ENCODE measurements at regions of chr9 and their contacts with region 1.

Region 1: GRCh38 chr9:100598641-100599145 is 20.8 kb downstream of the CAVIN4 start:
- DNase-seq: peak; percentile 94
- H3K4me3 Mint-ChIP-seq: peak overlapping the region; percentile 78
- H3K27ac Mint-ChIP-seq: peak overlapping the region; percentile 13
- H3K4me1 Mint-ChIP-seq: peaks cover 11% of the 10 kb centered on the region
- H3K27me3 Mint-ChIP-seq: peaks cover 20% of the 10 kb centered on the region

Region 2: GRCh38 chr9:99184475-99185347 is 1414.0 kb before region 1 on chr9:
- intact Hi-C with region 1: loop called (anchors 10 kb)
- DNase-seq: peak; percentile 92
- H3K4me3 Mint-ChIP-seq: no peak overlapping the region
- H3K27ac Mint-ChIP-seq: peak overlapping the region; percentile 56
- H3K4me1 Mint-ChIP-seq: peaks cover 43% of the 10 kb centered on the region
- H3K27me3 Mint-ChIP-seq: peaks cover 15% of the 10 kb centered on the region

Region 3: GRCh38 chr9:100222674-100223073 is 376.0 kb before region 1 on chr9:
- intact Hi-C with region 1: loop called (anchors 5 kb)
- DNase-seq: no peak
- H3K4me3 Mint-ChIP-seq: no peak overlapping the region
- H3K27ac Mint-ChIP-seq: no peak overlapping the region
- H3K4me1 Mint-ChIP-seq: peaks cover 2% of the 10 kb centered on the region
- H3K27me3 Mint-ChIP-seq: no peaks in the 10 kb centered on the region

Region 4: DNA sequence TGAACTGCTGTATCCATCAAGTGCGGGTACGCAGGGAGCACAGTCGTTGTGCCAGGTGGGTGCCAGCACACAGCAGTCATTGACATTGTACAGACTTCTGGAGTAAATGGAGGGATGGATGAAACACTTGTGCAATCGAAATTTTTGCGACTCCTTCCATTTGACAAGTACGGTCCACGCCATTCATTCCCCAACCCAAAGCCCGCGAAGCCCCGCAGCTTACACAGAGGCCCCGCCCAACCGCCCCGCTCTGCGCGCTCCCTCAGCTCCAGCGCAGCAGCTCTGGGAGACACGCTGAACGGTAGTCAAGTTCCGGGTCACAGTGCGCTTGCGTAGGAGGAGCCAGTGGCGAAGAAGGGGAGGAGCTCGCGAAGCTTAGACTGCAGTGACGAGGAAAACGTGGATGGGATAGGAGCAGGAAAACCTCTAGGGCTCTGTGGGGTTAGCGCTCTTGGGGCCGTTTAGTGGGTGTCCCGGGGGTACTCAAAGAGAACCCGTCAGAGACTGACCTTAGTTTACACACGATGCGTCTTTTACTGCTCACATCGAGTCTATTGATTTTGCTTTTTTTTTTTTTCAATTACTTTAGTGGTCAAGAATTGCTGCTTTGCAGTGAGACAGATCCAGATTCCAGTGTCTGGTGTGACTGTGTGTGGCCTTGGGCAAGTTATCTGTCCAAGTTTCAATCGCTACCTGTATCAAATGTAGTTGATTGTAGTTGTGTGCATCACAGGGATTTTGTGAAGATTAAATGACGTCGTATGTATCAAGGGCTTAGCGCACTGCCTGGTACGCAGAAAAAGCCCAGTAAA is 187.0 kb before region 1 on chr9:
- intact Hi-C with region 1: loop called (anchors 1 kb)
- DNase-seq: peak; percentile 96
- H3K4me3 Mint-ChIP-seq: peak overlapping the region; percentile 86
- H3K27ac Mint-ChIP-seq: peak overlapping the region; percentile 80
- H3K4me1 Mint-ChIP-seq: peaks cover 12% of the 10 kb centered on the region
- H3K27me3 Mint-ChIP-seq: peaks cover 18% of the 10 kb centered on the region

Region 5: DNA sequence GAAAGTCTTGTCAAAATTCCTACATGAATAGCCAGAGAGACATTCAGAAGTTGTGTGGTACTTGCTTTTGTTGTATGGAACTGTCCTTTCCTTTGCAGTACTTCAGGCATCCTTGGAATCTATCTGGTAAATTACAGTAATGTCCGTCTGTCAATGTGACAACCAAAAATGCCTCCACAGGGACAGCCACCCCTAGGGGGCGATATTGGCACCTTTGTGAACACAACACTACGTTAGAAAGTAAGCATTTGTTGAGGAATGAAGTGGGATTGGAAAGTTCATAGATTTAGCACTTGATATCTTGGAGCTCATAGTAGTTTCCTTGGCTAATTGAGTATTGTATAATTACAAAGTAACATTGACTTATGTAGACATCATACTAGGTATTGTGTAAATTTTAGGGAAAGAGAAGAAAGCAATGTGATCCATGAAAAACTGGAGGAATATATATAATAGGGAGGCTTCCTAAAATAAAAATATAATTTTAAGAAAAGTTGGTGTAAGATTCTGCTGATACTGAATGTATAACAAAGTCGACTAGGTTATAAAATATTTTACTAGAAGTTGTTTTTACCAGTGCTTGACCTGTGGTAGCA is 93.0 kb before region 1 on chr9:
- intact Hi-C with region 1: loop called (anchors 1 kb)
- DNase-seq: peak; percentile 87
- H3K4me3 Mint-ChIP-seq: no peak overlapping the region
- H3K27ac Mint-ChIP-seq: no peak overlapping the region
- H3K4me1 Mint-ChIP-seq: no peaks in the 10 kb centered on the region
- H3K27me3 Mint-ChIP-seq: peaks cover 9% of the 10 kb centered on the region

Region 6: DNA sequence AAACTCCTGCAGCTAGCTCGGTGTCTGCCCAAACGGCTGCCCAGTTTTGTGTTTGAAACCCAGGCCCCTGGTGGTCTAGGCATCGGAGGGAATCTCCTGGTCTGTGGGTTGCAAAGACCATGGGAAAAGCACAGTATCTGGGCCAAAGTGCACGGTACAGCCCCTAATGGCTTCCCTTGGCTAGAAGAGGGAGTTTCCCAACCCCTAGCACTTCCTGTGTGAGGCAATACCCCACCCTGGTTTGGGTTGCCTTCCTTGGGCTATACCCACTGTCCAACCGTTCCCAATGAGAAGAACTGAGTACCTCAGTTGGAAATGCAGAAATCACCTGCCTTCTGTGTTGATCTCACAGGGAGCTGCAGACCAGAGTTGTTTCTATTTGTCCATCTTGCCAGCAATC is 21.0 kb after region 1 on chr9:
- intact Hi-C with region 1: no loop called
- DNase-seq: no peak
- H3K4me3 Mint-ChIP-seq: no peak overlapping the region
- H3K27ac Mint-ChIP-seq: no peak overlapping the region
- H3K4me1 Mint-ChIP-seq: no peaks in the 10 kb centered on the region
- H3K27me3 Mint-ChIP-seq: no peaks in the 10 kb centered on the region

Region 7: DNA sequence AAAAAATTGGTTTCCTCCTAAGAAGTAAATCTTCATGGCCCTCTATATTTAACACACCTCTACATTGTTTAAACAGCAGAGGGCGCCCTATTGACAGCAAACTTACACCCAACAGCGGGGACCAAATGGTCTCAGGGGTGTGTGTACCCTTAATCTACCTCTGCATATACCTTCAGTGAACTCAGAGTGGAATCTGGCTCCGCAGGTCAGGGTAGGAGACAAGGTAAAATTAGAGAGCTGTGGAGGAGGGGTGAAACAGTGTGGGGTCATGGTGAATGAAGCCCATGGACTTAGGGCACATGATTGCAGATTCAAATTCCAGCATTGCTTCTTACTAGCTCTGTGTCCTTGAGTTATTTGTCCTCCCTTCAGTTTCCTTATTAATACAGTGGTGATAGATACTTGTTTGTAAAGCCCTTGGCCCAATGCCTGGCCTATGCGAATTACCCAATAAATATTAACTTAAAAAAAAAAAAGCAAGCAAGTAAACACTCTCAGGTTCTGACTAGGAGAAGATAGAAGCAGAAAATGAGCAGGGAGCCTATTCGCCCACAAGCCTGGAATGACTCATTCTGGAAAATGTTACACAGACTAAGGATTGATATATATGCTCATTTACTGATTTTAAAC is 102.1 kb after region 1 on chr9:
- intact Hi-C with region 1: no loop called
- DNase-seq: peak; percentile 61
- H3K4me3 Mint-ChIP-seq: no peak overlapping the region
- H3K27ac Mint-ChIP-seq: no peak overlapping the region
- H3K4me1 Mint-ChIP-seq: no peaks in the 10 kb centered on the region
- H3K27me3 Mint-ChIP-seq: no peaks in the 10 kb centered on the region

Measured in activated CD4-positive, alpha-beta T cell treated with anti-CD3 and anti-CD28 coated beads, Interleukin-2, amount 10 ng/mL, durations not matched to agents 24 days and 14 days (primary cell).